Heart right ventricle (tissue), 16 donors: ENCODE measurements at regions of chr11 and their contacts with region 1.

Region 1: GRCh38 chr11:127224276-127224675 is 223.7 kb upstream of the KIRREL3 start:
- DNase-seq: peak in 1 of 2 donors; percentile 10
- ATAC-seq: no peak
- H3K4me3 ChIP-seq: no peak overlapping the region
- H3K27ac ChIP-seq: no peak overlapping the region
- H3K4me1 ChIP-seq: no peaks in the 10 kb centered on the region
- H3K27me3 ChIP-seq: peaks cover 0 to 10% (median 0%) of the 10 kb centered on the region in 7 donors
- CTCF ChIP-seq: no peak

Region 2: GRCh38 chr11:127191689-127192088 is 32.6 kb before region 1 on chr11:
- intact Hi-C with region 1: loop called in 1 of 10 experiments (anchors 2 kb)
- DNase-seq: no peak
- ATAC-seq: no peak
- H3K4me3 ChIP-seq: no peak overlapping the region
- H3K27ac ChIP-seq: no peak overlapping the region
- H3K4me1 ChIP-seq: peaks cover 0 to 7% (median 0%) of the 10 kb centered on the region in 9 donors
- H3K27me3 ChIP-seq: peaks cover 0 to 15% (median 0%) of the 10 kb centered on the region in 7 donors
- CTCF ChIP-seq: no peak